Lower leg skin (tissue), 4 donors: ENCODE measurements at regions of chr3 and their contacts with region 1.

Region 1: DNA sequence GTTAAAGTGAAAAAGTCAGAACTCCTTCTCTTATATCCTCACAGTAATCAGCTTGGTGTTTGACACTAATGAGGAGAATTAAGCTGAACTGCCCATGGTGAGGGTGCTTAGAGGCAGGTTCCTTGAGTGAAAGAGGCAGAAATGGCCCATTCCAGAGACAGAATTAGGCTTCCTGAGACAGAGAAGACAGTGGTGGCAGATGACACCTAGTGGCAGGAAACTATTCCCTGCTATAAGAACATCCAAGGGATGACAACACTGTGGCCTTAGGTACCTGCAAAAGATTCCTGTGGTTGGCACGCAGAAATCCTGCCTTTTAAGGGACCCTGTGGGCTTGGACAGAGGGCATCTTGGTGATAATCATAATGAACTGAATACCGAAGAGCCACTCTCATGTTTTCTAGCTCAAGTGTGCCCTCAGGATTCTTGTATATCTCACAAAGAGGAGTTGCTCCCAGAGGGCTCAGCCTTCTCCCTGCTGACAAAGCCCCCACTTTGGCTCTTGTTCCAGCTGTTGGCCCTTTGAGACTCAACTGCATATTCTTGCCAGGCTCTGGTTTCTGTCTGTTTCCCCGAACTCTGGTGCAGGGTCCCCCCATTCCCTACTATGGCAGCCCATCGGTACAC is 56.0 kb downstream of the KBTBD12 start:
- DNase-seq: peak in 1 of 2 donors; percentile 24
- H3K4me3 ChIP-seq: no peak overlapping the region
- CTCF ChIP-seq: no peak
- POLR2A ChIP-seq: no peak

Region 2: DNA sequence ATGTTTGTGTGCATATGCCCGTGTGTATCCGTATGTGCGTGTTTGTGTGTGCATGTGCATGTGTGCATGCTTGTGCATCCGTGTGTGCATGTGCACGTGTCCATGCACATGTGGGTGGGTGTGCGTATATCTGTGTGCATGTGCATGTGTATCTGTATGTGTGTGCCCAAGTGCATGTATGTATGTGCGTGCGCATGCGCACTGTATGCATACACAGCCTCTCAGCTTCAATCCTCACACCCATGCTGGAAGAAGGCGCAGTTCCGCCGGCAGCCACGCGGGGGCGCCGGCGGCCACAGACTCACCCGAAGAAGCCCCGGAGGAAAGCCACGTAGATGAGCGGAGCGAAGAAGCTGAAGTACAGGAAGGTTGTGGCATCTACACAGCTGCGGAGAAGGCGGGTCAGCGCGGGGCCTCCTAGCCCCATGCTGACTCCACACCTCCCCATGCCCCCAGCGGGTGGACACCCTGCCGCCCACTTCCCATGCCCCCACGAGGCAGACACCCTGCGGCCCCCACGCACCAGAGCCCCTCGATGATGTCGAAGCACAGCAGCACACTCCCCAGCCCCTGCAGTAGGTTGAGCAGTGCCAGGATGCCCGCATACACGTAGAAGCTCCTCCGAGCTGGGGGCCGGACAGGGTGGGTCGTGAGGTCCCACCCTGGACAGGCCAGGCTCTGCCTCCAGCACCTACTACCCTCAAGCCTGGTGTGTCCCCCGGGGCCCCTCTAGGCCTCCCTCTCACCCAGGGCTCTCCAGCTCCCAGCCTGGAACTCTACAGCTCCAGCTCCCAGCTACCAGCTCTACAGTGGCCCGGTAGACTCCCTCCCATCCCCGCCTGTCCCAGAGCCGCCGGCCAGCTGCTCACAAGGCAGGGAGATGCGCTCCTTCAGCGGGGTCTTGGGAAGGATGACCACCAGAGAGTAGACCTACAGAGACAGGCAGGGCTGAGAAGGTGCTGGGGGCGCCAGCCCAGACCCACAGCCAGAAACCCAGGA is 395.9 kb before region 1 on chr3:
- intact Hi-C with region 1: loop called (anchors 10 kb)
- DNase-seq: peak; percentile 82 to 96
- H3K4me3 ChIP-seq: no peak overlapping the region
- CTCF ChIP-seq: peak in 1 of 3 donors; percentile 96
- POLR2A ChIP-seq: no peak

Region 3: GRCh38 chr3:127612966-127613365 is 358.1 kb before region 1 on chr3:
- intact Hi-C with region 1: no loop called
- DNase-seq: no peak
- H3K4me3 ChIP-seq: no peak overlapping the region
- CTCF ChIP-seq: no peak
- POLR2A ChIP-seq: no peak

Region 4: DNA sequence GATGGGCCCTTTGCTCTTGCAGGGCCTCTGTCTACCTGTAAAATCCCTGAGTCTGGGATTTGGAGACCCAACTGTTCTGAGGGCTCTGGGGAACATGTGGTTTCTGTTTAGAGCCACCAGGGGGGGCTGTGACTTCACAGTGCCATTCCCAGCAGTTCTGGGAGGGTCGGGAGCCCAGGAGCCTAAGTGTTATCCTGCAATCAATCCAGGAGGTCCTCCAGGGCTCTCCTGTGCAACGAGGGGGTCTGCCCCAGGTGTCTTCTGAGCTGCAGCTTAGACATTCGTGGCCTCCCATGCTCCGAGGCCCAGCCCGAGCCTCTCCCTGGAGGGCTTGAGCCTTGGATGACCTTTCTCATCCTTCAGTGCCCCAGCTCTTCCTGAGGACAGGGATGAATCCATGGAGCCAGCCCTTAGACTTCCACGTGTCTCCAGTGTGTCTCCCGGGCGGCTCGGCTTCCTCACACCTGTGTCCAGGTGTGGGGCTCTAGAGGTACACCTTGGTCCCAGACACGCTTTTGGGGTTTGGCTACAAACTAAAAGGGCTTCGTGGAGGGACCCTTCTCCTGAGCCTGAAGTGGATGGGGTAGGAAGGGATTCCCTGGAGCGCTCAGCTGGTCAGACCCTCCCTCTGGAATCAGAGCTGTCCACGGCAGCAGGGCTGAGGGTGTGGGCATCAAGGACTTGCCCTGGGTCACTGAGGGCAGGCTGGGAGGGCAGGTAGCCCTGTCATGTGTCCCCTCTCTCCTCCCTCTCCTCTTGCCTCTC is 318.7 kb before region 1 on chr3:
- intact Hi-C with region 1: loop called (anchors 5 kb)
- DNase-seq: peak in 1 of 2 donors; percentile 84
- H3K4me3 ChIP-seq: no peak overlapping the region
- CTCF ChIP-seq: peak in 1 of 3 donors; percentile 66
- POLR2A ChIP-seq: no peak

Region 5: DNA sequence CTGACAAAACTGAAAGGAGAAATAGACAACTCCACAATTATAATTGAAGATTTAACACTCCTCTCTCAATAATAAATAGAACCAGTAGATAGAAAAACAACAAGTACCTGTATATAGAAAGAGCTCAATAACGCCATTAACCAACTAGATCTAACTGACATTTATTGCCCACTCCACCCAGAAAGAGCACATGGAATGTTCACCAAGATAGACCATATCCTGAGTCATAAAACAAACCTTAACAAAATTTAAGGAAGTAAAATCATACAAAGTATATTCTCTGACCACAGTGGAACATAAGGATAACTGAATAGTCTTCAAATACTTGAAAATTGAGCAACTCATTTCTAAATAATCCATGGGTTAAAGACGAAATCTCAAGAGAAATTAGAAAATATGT is 31.0 kb before region 1 on chr3:
- intact Hi-C with region 1: no loop called
- DNase-seq: no peak
- H3K4me3 ChIP-seq: no peak overlapping the region
- CTCF ChIP-seq: no peak
- POLR2A ChIP-seq: no peak